B cell (primary cell): ENCODE measurements at regions of chr3 and their contacts with region 1.

Region 1: GRCh38 chr3:50365080-50365841 is 5.9 kb upstream of the TMEM115 start:
- DNase-seq: peak; percentile 95
- ATAC-seq: peak; percentile 97
- H3K4me3 ChIP-seq: peak overlapping the region; percentile 24 to 84 (median 81)
- H3K4me3 Mint-ChIP-seq: peak overlapping the region; percentile 91
- H3K27ac ChIP-seq: peak overlapping the region; percentile 78 to 86
- H3K27ac Mint-ChIP-seq: peak overlapping the region; percentile 94
- H3K4me1 ChIP-seq: peaks cover 13 to 22% of the 10 kb centered on the region in 2 donors
- H3K4me1 Mint-ChIP-seq: peaks cover 21% of the 10 kb centered on the region
- H3K27me3 ChIP-seq: peaks cover 0 to 3% (median 0%) of the 10 kb centered on the region in 4 experiments
- H3K27me3 Mint-ChIP-seq: peaks cover 4% of the 10 kb centered on the region
- CTCF ChIP-seq: no peak

Region 2: DNA sequence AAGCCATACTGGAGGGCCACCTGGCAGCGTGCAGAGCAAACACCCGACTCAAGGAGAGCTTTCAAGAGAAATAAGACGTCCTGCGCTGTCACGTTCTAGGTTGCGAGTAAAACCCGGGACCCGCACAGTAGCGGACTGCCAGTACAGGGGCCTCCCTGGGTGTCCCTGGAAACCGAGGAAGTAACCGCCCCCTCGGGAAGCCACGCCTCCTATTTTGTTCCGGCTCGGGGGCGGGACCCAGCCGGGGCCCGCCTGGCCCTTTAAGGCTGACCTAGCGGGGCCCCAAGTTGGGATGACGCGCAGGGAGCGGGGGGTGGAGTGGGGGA is 251.5 kb after region 1 on chr3:
- CTCF ChIA-PET with region 1: no interaction called
- POLR2A ChIA-PET with region 1: no interaction called
- intact Hi-C with region 1: loop called (anchors 1 kb)
- DNase-seq: peak; percentile 96
- ATAC-seq: peak; percentile 76
- H3K4me3 ChIP-seq: peak overlapping the region; percentile 78 to 93 (median 86)
- H3K4me3 Mint-ChIP-seq: peak overlapping the region; percentile 86
- H3K27ac ChIP-seq: peak overlapping the region; percentile 30 to 66
- H3K27ac Mint-ChIP-seq: peak overlapping the region; percentile 90
- H3K4me1 ChIP-seq: peaks cover 31 to 51% of the 10 kb centered on the region in 2 donors
- H3K4me1 Mint-ChIP-seq: peaks cover 56% of the 10 kb centered on the region
- H3K27me3 ChIP-seq: no peaks in the 10 kb centered on the region
- H3K27me3 Mint-ChIP-seq: no peaks in the 10 kb centered on the region
- CTCF ChIP-seq: no peak